ENCODE measurements at regions of chr2 and their contacts with region 1.

Region 1: DNA sequence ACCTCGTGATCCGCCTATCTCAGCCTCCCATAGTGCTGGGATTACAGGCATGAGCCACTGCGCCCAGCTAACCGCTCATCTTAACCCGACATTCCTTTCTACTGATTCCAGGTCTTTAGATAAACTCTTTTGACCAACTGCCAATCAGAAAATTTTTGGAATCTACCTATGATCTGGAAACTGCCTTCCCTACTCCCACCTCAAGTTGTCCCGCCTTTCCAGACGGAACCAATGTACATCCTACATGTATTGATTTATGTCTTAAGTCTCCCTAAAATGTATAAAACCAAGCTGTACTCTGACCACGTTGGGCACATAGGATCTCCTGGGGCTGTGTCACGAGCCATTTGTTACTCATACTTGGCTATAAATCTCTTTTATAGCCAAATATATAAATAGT is 3.2 kb upstream of the NEU2 start:
- DNase-seq: no peak
- CTCF ChIP-seq: no peak

Region 2: DNA sequence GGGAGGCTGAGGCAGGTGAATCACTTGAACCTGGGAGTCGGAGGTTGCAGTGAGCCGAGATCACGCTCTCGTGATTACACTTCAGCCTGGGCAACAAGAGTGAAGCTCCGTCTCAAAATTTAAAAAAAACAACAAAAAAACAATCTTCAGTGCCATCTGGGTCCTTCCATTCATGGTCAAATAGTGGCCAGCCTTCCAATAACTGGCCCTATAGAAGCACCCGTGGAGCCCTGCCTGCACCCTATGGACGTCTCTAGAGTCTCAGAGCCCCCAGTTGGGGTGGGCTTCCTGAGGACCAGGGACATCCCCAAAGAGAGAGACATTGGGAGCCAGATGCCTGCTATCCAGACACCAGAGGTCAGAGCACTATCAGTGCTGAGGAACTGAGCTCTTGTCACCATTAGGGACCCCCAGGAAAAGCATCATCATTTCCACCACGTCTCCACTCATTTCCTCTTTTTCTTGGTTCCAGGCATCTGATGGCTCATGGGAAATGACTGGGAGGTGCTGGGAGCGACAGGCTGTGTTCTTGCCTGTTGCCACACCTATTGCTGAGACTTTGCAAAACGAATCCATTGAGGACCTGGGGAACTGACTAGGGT is 12.5 kb after region 1 on chr2:
- CTCF ChIA-PET with region 1: interaction called, 20 read pairs
- POLR2A ChIA-PET with region 1: no interaction called
- DNase-seq: no peak
- CTCF ChIP-seq: no peak

Region 3: DNA sequence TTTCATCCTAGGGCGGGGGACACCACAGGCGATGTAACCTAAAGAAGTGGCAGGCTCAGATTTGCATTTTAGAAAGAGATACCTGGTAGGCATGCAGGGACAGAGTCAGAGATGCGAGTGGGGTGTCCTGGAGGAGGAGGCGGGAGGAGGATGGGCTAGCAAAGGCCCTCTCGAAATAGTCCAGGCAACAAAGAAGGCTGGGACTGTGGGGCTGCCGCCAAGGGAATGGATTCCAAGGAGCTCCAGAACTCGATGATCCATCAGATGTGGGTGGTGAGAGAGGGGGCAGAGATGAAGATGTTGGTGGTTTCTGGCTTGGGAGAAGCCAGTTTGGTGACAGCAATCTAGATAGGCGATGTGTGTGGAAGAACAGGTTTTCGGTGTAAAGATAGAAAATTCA is 18.3 kb after region 1 on chr2:
- CTCF ChIA-PET with region 1: interaction called, 22 read pairs
- POLR2A ChIA-PET with region 1: no interaction called
- DNase-seq: no peak
- CTCF ChIP-seq: no peak

Measured in GM10248 (cell line).